Endothelial cell of umbilical vein (primary cell): ENCODE measurements at regions of chr15 and their contacts with region 1.

Region 1: DNA sequence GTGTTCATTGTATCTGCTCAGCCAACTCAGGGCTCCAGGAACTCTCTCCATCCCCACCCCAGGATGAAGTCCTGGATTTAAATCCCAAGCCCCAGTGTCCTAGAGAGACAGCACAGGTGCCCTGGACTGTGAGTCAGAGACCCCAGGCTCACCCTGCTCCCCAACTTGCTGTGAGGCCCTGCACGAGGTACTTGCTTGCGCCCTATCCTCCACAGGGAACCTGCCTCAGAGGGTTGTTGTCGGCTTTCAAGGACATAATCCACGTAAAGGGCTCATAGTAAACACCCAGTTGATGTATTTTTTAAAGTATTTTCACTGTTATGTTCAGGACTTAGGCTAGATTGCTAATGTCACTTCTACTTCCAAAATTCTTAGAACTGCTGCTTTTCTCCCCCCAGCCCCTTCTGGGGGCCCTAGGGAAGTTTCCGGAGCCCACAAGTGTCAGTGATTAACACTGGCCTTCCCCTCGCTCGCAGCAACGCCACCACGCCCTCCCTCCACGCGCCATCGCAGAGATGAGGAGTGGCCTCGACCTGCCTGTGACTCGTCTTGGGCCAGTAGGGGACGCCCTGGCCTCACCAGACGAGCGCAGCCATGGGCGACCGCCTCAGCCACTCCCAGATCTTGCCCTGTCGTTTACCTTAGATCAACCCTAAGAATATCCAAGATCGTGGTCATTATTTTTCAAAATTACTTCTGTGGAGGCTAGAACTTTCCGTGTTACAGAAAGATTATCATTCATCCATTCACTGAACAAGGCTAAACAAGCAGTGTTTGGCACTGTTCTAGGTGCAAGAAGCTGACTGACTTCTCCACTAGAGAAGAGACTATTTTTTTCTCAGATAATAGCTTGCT is 6.0 kb upstream of the SRP14 start:
- DNase-seq: peak; percentile 83
- H3K4me3 ChIP-seq: no peak overlapping the region
- H3K27ac ChIP-seq: no peak overlapping the region
- H3K4me1 ChIP-seq: peaks cover 28% of the 10 kb centered on the region
- H3K27me3 ChIP-seq: no peaks in the 10 kb centered on the region
- CTCF ChIP-seq: peak; percentile 97
- POLR2A ChIP-seq: no peak

Region 2: DNA sequence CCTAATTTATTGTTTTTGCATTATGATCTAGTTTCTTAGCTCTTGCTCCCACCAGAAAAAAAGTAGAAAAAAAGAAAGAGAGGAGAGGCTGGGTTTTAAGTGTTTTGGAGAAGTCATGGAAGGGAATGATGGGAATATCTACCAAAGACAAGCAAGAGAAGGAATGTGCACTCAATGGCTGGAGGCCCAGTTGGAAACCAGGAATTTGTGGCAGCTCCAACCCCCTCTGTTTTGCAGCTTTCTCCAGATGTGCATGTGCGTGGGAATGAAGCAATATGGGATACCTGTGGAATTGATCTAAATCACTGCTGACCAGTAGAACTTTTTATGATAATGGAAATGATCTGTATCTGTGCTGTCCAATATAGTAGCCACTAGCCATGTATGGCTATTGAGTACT is 83.9 kb before region 1 on chr15:
- CTCF ChIA-PET with region 1: no interaction called
- POLR2A ChIA-PET with region 1: no interaction called
- dilution Hi-C with region 1: no loop called
- intact Hi-C with region 1: no loop called
- DNase-seq: no peak
- H3K4me3 ChIP-seq: no peak overlapping the region
- H3K27ac ChIP-seq: no peak overlapping the region
- H3K4me1 ChIP-seq: no peaks in the 10 kb centered on the region
- H3K27me3 ChIP-seq: no peaks in the 10 kb centered on the region
- CTCF ChIP-seq: no peak
- POLR2A ChIP-seq: no peak

Region 3: GRCh38 chr15:40081691-40082194 is 36.8 kb after region 1 on chr15:
- CTCF ChIA-PET with region 1: interaction called, 9 read pairs
- POLR2A ChIA-PET with region 1: no interaction called
- dilution Hi-C with region 1: no loop called
- intact Hi-C with region 1: loop called (anchors 1 kb)
- DNase-seq: peak; percentile 92
- H3K4me3 ChIP-seq: peak overlapping the region in 1 of 3 experiments; percentile 47
- H3K27ac ChIP-seq: peak overlapping the region; percentile 81
- H3K4me1 ChIP-seq: peaks cover 28% of the 10 kb centered on the region
- H3K27me3 ChIP-seq: no peaks in the 10 kb centered on the region
- CTCF ChIP-seq: no peak
- POLR2A ChIP-seq: peak; percentile 67

Region 4: GRCh38 chr15:40108855-40109735 is 64.2 kb after region 1 on chr15 and contains the start of gene BMF:
- CTCF ChIA-PET with region 1: interaction called, 144 read pairs
- POLR2A ChIA-PET with region 1: interaction called, 4 read pairs
- dilution Hi-C with region 1: no loop called
- intact Hi-C with region 1: loop called (anchors 1 kb)
- DNase-seq: peak; percentile 99
- H3K4me3 ChIP-seq: peak within 1 kb of the TSS; percentile 61 to 79 (median 72)
- H3K27ac ChIP-seq: peak within 1 kb of the TSS; percentile 37
- H3K4me1 ChIP-seq: peaks cover 10% of the 10 kb centered on the region
- H3K27me3 ChIP-seq: peaks cover 4 to 19% of the 10 kb centered on the region in 2 experiments
- CTCF ChIP-seq: peak; percentile 35 to 48
- POLR2A ChIP-seq: no peak
- total RNA-seq, gene BMF: 9.8 and 13.9 TPM in 2 replicates

Region 5: DNA sequence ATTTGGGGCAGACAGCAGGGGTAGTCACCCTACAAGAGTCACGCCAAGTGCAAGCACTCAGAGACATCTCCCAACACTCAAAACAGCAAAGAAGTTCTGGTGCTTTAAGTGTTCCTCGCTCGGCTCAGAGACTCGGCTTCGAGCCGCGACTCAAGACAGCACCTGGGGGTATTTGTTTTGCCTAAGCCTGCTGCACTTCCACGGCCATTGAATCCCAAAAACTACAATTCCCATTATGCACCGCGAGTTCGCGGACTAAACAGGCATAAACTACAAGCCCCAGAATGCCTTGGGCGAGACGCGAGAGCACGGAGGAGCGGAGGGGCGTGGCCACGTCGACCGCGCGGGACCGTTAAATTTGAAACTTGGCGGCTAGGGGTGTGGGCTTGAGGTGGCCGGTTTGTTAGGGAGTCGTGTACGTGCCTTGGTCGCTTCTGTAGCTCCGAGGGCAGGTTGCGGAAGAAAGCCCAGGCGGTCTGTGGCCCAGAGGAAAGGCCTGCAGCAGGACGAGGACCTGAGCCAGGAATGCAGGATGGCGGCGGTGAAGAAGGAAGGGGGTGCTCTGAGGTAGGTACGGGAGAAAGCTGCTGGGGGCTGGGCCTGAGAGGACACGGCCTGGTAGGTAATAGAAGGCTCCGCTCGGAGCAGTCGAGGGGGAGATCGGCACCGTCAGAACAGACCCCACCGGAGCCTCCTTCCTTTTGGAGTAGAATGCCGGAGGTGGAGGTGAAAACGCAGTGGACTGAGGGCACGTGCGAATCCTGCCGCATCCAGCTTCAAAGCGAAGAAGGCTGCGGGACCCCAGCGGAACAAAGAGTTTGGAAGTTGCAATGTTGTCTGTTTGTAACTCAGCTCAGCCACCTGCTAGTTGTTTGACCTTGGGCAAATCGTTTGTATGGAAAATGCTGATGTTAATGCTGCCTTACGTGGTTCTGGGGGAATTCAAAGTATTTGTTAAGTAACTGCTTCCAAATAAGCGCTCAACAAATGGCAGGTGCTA is 116.0 kb after region 1 on chr15 and contains the start of gene BUB1B:
- CTCF ChIA-PET with region 1: interaction called, 14 read pairs
- POLR2A ChIA-PET with region 1: no interaction called
- dilution Hi-C with region 1: no loop called
- intact Hi-C with region 1: loop called (anchors 1 kb)
- DNase-seq: peak; percentile 96
- H3K4me3 ChIP-seq: peak within 1 kb of the TSS; percentile 67 to 92 (median 71)
- H3K27ac ChIP-seq: peak within 1 kb of the TSS; percentile 24
- H3K4me1 ChIP-seq: peaks cover 15% of the 10 kb centered on the region
- H3K27me3 ChIP-seq: peaks cover 3 to 4% of the 10 kb centered on the region in 2 experiments
- CTCF ChIP-seq: no peak
- POLR2A ChIP-seq: peak; percentile 39
- total RNA-seq, gene BUB1B: 65.6 and 69.8 TPM in 2 replicates

Region 6: GRCh38 chr15:40217159-40217824 is 172.3 kb after region 1 on chr15:
- CTCF ChIA-PET with region 1: interaction called, 63 read pairs
- POLR2A ChIA-PET with region 1: no interaction called
- dilution Hi-C with region 1: no loop called
- intact Hi-C with region 1: loop called (anchors 1 kb)
- DNase-seq: peak; percentile 73
- H3K4me3 ChIP-seq: no peak overlapping the region
- H3K27ac ChIP-seq: no peak overlapping the region
- H3K4me1 ChIP-seq: peaks cover 3% of the 10 kb centered on the region
- H3K27me3 ChIP-seq: no peaks in the 10 kb centered on the region
- CTCF ChIP-seq: peak; percentile 60 to 71
- POLR2A ChIP-seq: no peak

Region 7: DNA sequence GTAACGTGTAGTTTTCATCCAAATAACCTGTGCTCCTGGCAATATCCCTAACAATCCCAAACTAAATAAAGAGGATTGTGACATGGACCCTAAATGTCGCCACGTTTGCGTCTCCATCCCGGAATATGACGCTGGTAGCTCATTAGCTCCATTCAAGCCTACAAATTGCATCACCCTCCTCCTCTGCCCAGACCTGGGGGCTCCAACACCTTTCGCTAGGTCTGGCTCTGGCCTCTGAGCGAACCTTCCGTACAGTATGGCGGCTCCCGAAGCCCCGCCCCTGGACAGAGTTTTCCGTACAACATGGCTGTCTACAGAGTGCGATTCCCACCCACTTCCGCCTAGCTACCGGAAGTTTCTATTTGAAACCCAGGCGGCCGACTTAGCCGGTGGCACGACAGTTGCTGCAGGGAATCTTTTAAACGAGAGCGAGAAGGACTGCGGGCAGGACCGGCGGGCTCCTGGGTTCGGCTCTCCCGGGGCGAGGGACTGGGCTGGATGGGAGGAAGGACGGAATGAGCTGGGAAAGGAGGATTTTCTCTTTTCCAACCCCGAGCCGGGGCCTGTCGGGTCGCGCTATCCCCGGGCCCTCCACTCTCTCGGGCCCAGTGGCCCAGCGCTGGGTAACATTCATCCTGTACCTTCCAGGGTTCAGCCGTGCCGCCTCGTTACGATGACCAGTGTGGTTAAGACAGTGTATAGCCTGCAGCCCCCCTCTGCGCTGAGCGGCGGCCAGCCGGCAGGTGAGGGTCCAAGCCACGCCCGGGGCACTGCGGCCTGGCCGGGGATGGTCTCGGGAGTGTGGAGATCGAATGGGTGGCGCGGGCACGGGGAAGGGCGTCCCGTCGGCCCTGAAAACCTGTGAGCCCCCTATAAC is 337.9 kb after region 1 on chr15 and contains the start of gene KNSTRN:
- CTCF ChIA-PET with region 1: no interaction called
- POLR2A ChIA-PET with region 1: no interaction called
- dilution Hi-C with region 1: no loop called
- intact Hi-C with region 1: no loop called
- DNase-seq: peak; percentile 87
- H3K4me3 ChIP-seq: peak within 1 kb of the TSS; percentile 78 to 93 (median 87)
- H3K27ac ChIP-seq: peak within 1 kb of the TSS; percentile 6
- H3K4me1 ChIP-seq: peaks cover 19% of the 10 kb centered on the region
- H3K27me3 ChIP-seq: no peaks in the 10 kb centered on the region
- CTCF ChIP-seq: no peak
- POLR2A ChIP-seq: peak; percentile 18
- total RNA-seq, gene KNSTRN: 54.9 and 61.4 TPM in 2 replicates

Region 8: DNA sequence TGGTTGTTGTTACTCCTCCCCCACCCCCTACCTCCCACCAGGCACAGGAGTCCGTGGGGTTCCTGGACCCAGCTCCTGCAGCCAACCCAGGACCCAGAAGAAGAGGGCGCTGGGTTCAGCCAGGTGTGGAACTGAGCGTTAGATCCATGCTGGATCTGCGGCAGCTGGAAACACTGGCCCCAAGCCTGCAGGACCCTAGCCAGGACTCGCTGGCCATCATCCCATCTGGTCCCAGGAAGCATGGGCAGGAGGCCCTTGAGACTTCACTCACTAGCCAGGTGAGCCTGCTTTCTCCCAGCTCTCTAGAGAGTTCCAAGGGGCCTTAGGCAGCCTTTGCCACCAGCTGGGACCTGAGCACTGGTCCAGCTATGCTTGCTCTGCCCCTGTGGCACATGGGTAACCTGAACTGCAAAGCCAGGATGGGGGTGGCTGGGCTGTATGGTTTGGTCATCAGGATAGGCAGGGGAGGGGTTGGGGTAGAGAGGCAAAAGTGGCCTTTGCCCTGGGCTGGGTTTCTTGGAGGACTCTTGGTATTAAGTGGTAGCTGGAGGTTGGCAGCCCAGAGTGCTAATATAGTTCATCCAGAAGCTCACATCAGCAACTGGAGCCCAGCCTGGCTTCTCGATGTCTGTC is 1776.0 kb after region 1 on chr15:
- CTCF ChIA-PET with region 1: no interaction called
- POLR2A ChIA-PET with region 1: no interaction called
- dilution Hi-C with region 1: no loop called
- intact Hi-C with region 1: no loop called
- DNase-seq: no peak
- H3K4me3 ChIP-seq: no peak overlapping the region
- H3K27ac ChIP-seq: no peak overlapping the region
- H3K4me1 ChIP-seq: no peaks in the 10 kb centered on the region
- H3K27me3 ChIP-seq: no peaks in the 10 kb centered on the region
- CTCF ChIP-seq: no peak
- POLR2A ChIP-seq: no peak